Heart right ventricle (tissue), 16 donors: ENCODE measurements at regions of chr1 and their contacts with region 1.

Region 1: DNA sequence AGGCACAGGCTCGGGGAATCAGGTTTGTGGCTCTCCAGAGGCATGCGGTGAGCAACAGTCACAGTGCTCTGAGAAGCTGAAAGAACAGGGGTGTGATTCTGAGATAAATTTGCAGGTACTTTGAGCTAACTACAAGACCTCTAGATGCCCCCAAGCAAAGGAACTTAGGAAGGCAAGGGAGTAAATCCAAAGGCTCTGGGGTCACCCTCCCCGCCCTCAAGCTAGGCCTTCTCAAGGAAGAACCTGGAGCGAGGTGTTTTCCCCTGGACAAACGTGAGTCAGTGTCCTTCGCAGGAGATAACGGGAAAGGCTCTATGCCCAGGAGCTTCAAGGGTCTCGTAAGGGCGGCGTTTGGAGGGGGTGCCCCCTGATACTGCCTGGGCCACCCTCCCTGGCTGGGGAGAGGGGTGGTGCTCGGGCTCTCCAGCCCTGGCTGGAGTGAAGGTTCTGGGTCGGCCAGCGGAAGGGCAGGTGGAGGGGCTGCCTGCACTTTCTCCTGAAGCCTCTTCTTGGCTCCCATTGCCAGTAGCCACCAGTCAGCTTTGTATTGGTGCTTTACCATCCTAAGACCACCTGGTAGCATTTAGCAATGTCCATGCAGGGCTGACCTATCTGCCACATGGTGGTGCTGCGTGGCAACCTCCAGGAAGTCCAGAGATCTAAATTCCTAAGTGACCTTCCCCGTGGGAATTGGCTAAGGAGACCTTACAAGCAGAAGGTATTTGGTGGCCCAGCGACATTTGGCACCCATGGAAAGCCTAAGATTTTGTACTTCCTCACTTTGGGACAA is 44.0 kb downstream of the GPR161 start:
- DNase-seq: no peak
- ATAC-seq: peak in 4 of 8 donors; percentile 22 to 57 (median 34)
- H3K4me3 ChIP-seq: no peak overlapping the region
- H3K27ac ChIP-seq: no peak overlapping the region
- H3K4me1 ChIP-seq: peaks cover 0 to 4% (median 0%) of the 10 kb centered on the region in 9 donors
- H3K27me3 ChIP-seq: no peaks in the 10 kb centered on the region
- CTCF ChIP-seq: peak in 7 of 9 donors; percentile 26 to 49 (median 37)

Region 2: DNA sequence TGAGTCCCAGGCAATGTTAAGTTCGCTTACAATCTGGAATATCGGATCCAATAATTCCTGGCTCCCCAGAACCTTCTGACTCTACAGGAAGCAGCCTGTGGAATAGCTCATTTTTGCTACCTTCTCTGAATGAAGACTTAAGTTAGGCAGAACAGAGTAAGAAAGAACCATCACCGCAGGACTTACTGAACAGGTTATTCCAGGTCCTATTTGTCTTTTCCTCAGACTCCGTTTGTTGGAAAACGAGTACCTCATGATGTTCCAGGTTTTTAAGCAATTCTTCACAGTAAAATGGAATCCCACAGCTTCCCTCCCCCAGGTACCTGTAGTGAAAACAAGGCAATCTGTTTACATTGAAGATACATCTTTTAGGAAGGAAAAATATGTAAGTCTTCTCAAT is 238.6 kb before region 1 on chr1:
- intact Hi-C with region 1: no loop called
- DNase-seq: no peak
- ATAC-seq: no peak
- H3K4me3 ChIP-seq: no peak overlapping the region
- H3K27ac ChIP-seq: no peak overlapping the region
- H3K4me1 ChIP-seq: peaks cover 0 to 5% (median 0%) of the 10 kb centered on the region in 9 donors
- H3K27me3 ChIP-seq: no peaks in the 10 kb centered on the region
- CTCF ChIP-seq: no peak

Region 3: DNA sequence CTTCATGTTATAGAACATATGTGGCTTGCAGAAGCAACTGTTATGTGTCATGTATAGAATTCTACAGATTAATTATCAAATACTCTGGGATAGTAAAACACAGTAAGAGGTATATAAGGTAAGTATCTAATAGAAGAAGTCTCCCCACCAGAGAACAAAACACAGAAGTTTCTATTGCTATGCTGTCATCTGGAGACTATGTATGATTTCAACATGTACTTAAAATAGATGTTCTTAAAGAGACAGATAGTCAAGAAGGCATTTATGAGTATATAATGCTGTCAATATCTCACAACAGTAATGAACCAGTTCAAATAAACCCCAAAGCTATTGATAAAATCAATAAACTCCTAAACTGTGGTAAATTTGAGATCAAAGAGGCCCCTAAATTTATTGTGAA is 170.7 kb before region 1 on chr1:
- intact Hi-C with region 1: no loop called
- DNase-seq: no peak
- ATAC-seq: peak in 6 of 8 donors; percentile 44 to 91 (median 77)
- H3K4me3 ChIP-seq: peak overlapping the region in 1 of 10 donors; percentile 6
- H3K27ac ChIP-seq: peak overlapping the region in 6 of 10 donors; percentile 25 to 72 (median 58)
- H3K4me1 ChIP-seq: peaks cover 0 to 49% (median 16%) of the 10 kb centered on the region in 9 donors
- H3K27me3 ChIP-seq: no peaks in the 10 kb centered on the region
- CTCF ChIP-seq: no peak

Region 4: DNA sequence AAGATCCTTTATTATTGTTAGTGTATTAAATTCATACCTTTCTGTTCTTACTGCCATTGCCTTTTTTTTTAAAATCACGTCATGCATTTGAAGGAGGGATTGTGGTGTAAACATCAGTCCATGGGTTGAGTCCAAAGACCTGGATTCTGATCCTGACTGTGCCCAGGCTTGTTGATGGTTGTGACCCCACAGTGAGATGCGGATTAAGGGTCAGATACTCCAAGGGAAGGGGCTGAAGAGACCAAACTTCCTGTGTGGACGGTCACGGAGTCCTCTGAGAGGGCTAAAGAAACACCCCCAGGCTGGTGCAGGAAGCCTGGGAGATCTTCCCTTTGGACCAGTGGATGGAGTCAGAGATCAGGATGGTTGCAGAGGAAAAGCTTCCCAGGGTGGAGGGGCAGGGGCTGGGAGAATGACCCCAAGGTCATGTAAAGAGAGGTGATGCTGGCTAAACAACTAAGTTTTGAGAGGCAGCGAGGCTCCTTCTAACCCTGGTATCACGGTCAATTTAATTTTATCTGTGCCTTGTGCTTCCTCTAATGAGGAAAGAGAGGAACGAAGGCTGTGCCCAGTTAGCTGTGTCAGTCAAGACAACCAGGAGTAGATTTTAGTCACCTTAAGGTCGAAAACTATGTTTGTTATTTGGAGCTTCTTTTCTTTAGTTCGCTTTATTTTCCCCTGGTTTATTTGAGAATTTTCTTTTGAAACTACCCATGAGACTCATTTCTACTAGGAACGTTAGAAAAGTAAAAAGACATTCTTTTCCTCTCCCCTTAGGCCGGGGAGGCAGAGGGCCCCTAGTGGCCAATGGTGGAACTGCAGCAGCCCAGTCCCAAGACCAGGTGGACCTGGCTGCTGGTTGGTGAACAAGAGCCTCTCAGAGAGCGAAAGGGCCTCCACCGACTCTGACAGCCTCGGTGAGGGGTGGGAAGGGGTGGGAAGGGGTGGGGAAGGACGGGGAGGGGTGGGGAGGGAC is 52.7 kb after region 1 on chr1:
- intact Hi-C with region 1: loop called in 2 of 10 experiments (anchors 5 to 10 kb)
- DNase-seq: peak; percentile 83 to 89
- ATAC-seq: peak; percentile 81 to 97 (median 94)
- H3K4me3 ChIP-seq: peak overlapping the region in 1 of 10 donors; percentile 15
- H3K27ac ChIP-seq: peak overlapping the region in 2 of 10 donors; percentile 8 to 15
- H3K4me1 ChIP-seq: peaks cover 0 to 6% (median 4%) of the 10 kb centered on the region in 9 donors
- H3K27me3 ChIP-seq: no peaks in the 10 kb centered on the region
- CTCF ChIP-seq: peak; percentile 90 to 96 (median 94)

Region 5: DNA sequence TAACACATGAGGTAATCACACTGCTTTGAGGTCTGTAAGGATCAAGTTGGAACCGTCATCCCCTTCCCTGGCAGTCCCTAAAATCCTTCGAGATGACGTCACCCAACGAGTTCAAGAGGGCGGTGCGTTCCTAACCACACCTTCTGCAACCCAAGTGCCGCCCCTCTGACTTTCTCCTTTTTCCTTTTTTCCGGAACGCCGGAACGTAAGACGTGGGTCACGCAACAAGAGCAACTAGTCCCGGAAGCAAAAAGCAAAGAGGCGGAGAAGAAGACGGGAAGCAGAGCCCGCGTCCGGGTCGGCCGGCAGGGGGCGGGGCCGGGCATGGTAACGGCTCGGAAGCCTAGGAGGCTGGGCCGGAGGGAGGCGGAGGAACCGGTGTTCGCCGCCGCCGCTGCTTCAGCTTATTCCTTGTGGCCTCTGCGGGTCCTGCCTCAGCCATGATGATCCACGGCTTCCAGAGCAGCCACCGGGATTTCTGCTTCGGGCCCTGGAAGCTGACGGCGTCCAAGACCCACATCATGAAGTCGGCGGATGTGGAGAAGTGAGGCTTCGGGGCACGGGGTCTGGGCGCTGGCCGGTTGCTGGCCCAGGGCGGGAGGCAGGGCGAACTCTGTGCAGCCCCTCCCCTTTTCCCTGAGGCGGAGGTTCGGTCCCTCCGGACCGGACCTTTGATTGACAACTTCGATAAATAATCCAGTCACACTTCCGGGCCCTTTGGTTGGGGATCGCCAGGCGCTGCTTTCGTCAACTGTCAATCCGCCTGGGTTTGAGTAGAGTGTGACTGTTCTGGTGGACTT is 86.1 kb after region 1 on chr1 and contains the start of gene TIPRL:
- intact Hi-C with region 1: no loop called
- DNase-seq: peak; percentile 95 to 96
- ATAC-seq: peak; percentile 94 to 99 (median 98)
- H3K4me3 ChIP-seq: peak within 1 kb of the TSS; percentile 70 to 98 (median 74)
- H3K27ac ChIP-seq: peak within 1 kb of the TSS; percentile 67 to 98 (median 94)
- H3K4me1 ChIP-seq: peaks cover 0 to 16% (median 14%) of the 10 kb centered on the region in 9 donors
- H3K27me3 ChIP-seq: peaks cover 0 to 4% (median 0%) of the 10 kb centered on the region in 7 donors
- CTCF ChIP-seq: peak; percentile 39 to 89 (median 73)
- total RNA-seq, gene TIPRL: 25.0 to 37.5 (median 31.3) TPM

Region 6: DNA sequence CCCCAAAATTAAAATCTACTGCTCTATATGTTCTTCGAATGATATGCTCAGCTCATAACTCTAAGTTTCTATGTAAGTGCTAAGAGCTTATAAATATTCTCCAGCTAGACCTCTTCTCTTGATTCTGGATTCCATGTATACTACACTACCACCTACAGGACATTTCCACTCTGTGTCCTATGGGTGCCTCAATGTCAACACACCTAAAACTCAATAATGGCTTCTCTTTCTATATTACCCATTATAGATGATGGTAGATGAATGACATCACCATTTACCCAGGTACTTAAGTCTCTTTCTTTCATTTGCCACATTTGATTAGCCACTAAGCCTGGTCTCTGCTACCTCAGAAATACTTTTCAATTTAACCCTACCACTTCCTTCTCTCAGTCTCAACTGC is 229.2 kb after region 1 on chr1:
- intact Hi-C with region 1: loop called in 2 of 10 experiments (anchors 10 kb)
- DNase-seq: no peak
- ATAC-seq: peak in 3 of 8 donors; percentile 59 to 63 (median 59)
- H3K4me3 ChIP-seq: no peak overlapping the region
- H3K27ac ChIP-seq: no peak overlapping the region
- H3K4me1 ChIP-seq: peaks cover 0 to 8% (median 0%) of the 10 kb centered on the region in 9 donors
- H3K27me3 ChIP-seq: no peaks in the 10 kb centered on the region
- CTCF ChIP-seq: peak in 8 of 9 donors; percentile 4 to 54 (median 40)

Region 7: DNA sequence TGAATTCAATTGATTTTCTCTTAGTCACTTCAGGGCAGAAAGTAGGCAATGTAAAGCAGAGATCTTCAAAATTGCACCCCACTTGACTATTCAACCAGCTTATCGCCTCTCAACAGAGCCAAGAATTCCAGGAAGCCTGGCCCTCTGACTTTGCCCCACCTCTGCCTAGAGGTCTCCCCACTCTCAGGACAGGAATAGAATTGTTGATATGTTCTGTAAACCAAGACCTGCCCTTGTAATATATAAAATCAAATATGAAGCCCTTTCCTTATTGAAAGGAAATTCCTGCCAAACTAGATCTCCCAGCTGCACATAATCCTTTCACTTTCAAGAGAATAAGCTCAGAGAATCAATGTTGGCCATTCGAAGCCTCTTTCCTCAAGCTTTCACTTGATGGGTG is 752.4 kb after region 1 on chr1:
- intact Hi-C with region 1: no loop called
- DNase-seq: no peak
- ATAC-seq: peak in 4 of 8 donors; percentile 47 to 86 (median 50)
- H3K4me3 ChIP-seq: no peak overlapping the region
- H3K27ac ChIP-seq: no peak overlapping the region
- H3K4me1 ChIP-seq: peaks cover 0 to 24% (median 4%) of the 10 kb centered on the region in 9 donors
- H3K27me3 ChIP-seq: no peaks in the 10 kb centered on the region
- CTCF ChIP-seq: no peak